ENCODE measurements at regions of chr9 and their contacts with region 1.

Region 1: DNA sequence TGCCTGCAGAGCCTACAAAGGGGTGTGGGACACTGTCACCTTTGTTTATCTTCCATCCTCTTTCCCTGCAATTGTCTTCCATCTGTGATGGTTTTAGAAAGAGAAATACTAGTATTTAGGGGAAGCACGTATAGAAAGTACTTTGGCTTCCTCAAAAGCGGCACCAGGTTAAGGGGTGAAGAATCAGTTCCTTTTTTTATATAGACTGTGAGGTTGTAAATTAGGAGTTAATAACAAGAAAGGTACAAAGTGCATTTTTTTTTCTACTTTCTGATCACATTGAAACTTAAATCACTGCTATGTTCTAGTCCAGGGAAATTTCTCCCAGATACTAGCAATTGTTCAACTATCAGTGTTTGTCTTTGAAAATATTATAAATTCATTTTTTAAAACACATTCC is 219.3 kb downstream of the CEMIP2 start:
- DNase-seq: no peak
- H3K4me3 ChIP-seq: no peak overlapping the region
- CTCF ChIP-seq: no peak

Region 2: GRCh38 chr9:71302776-71303175 is 246.2 kb before region 1 on chr9:
- in situ Hi-C with region 1: no loop called
- DNase-seq: no peak
- H3K4me3 ChIP-seq: no peak overlapping the region
- CTCF ChIP-seq: no peak

Region 3: DNA sequence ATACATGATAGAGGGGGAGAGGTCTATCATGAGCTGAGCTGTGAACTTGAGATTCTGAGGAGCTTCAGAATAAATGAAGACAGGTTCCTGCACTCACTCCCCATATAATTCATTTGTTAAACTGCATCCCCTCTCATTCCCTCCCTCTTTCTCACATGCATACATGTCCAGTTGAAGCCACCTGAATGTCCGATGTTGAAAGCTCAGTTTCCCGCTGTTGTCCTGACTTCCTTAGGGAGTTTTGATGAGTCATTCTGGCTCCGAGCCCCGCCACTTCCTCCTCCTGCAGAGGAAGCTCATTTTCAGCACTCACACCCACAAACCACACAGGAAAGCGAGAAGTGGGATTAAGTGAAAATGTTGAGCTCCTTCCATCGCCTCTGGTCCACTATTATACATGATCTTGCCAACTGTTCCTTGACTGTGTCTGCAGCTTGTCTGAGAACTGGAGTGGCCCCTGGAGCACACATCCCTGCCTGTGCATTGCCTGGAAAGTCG is 98.1 kb after region 1 on chr9:
- in situ Hi-C with region 1: loop called (anchors 25 kb)
- DNase-seq: peak; percentile 78
- H3K4me3 ChIP-seq: no peak overlapping the region
- CTCF ChIP-seq: no peak